ENCODE measurements at regions of chr7 and their contacts with region 1.

Region 1: GRCh38 chr7:128154504-128154903 is 86.6 kb upstream of the LEP start:
- DNase-seq: no peak
- H3K4me3 ChIP-seq: no peak overlapping the region
- H3K27ac ChIP-seq: no peak overlapping the region
- H3K4me1 ChIP-seq: no peaks in the 10 kb centered on the region
- H3K27me3 ChIP-seq: no peaks in the 10 kb centered on the region
- CTCF ChIP-seq: no peak

Region 2: GRCh38 chr7:127245607-127246006 is 908.9 kb before region 1 on chr7:
- CTCF ChIA-PET with region 1: no interaction called
- dilution Hi-C with region 1: no loop called
- in situ Hi-C with region 1: no loop called
- intact Hi-C with region 1: no loop called
- DNase-seq: no peak
- H3K4me3 ChIP-seq: no peak overlapping the region
- H3K27ac ChIP-seq: no peak overlapping the region
- H3K4me1 ChIP-seq: no peaks in the 10 kb centered on the region
- H3K27me3 ChIP-seq: peaks cover 14% of the 10 kb centered on the region
- CTCF ChIP-seq: no peak

Region 3: DNA sequence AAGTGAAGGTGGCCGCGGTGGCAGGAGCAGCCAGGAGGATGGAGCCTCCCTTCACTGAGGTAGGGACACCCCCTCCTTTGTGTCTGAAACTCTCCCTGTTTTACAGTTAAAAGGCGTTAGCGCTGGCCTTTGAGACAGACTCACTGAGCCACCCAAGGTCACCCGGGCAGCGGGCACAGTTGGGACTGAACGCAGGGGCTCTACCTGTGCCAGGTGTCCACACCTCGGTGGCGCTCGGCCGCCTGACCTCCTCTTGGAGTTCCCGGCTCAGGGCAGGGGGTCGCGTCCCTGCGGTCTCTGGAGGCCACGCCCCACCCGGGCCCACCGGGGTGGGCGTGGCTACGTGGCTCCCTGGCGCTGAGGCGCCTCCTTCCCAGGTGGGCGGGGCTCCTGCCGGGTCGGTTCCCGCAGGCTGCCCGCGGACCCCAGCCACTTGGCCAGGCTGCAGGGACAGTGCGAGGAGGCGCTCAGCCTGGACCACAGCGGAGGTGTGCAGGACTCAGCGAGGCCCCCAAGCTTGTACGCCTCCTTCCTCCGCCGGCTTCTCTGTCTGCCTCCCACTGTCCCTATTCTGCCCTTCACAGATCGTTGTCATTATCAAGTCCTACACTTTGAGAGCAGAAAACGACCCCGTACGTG is 46.7 kb after region 1 on chr7:
- CTCF ChIA-PET with region 1: no interaction called
- dilution Hi-C with region 1: loop called (anchors 5 kb)
- in situ Hi-C with region 1: no loop called
- intact Hi-C with region 1: no loop called
- DNase-seq: no peak
- H3K4me3 ChIP-seq: no peak overlapping the region
- H3K27ac ChIP-seq: no peak overlapping the region
- H3K4me1 ChIP-seq: peaks cover 6% of the 10 kb centered on the region
- H3K27me3 ChIP-seq: peaks cover 5% of the 10 kb centered on the region
- CTCF ChIP-seq: no peak

Region 4: DNA sequence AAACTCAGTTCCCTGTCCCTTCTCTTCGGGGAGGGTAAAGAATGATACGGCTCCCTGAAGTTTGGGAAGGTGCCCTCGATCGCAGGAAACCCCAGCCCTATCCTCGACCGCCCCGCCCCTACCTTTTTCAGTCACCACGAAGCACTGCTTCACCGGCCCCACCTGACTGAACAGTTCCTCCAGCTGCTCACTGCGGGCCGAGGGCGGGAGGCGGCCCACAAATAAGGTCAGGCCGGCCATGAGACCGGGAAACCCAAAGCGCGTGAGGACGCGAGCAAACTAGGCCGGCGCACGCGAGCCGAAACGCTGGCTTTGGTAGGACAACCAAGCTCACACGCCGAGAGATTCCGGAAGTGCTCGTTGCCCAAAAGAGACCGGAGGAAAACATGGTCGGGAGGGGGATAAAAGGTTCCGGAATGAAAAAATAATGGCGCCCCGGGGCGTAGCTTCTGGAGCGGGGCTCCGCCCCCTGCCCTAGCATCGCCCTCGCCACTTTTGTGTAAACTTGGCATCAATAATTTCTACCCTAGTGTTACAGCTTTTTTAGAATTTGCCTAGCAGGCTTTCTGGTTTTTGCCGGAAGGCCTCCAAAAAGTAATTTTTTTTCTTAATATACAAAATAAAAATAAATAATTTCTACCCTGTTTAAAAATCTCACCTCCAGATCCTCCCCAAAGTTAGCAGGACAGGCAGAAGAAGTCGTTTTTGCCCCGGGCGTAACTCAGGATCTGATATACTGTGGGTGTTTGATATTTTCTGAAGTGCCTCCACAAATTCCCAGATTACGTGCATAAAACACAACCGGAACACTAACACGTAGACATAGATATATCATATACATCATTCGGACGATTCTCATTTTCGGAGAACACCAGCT is 189.3 kb after region 1 on chr7 and contains the start of gene RBM28:
- CTCF ChIA-PET with region 1: no interaction called
- dilution Hi-C with region 1: no loop called
- in situ Hi-C with region 1: no loop called
- intact Hi-C with region 1: no loop called
- DNase-seq: peak; percentile 92
- H3K4me3 ChIP-seq: peak within 1 kb of the TSS; percentile 80 to 97 (median 89)
- H3K27ac ChIP-seq: peak within 1 kb of the TSS; percentile 70
- H3K4me1 ChIP-seq: peaks cover 16% of the 10 kb centered on the region
- H3K27me3 ChIP-seq: no peaks in the 10 kb centered on the region
- CTCF ChIP-seq: no peak
- total RNA-seq, gene RBM28: 10.7 to 46.9 TPM

Measured in mammary epithelial cell (primary cell).